Activated CD4-positive, alpha-beta memory T cell treated with anti-CD3 and anti-CD28 coated beads, Interleukin-2, amount 10 ng/mL, durations not matched to agents 7 days and 5 days (primary cell): ENCODE measurements at regions of chr6 and their contacts with region 1.

Region 1: GRCh38 chr6:29737707-29738630 is 14.7 kb downstream of the HLA-F start:
- DNase-seq: peak; percentile 76
- H3K4me3 Mint-ChIP-seq: no peak overlapping the region
- H3K27ac Mint-ChIP-seq: no peak overlapping the region
- H3K4me1 Mint-ChIP-seq: peaks cover 7% of the 10 kb centered on the region
- H3K27me3 Mint-ChIP-seq: no peaks in the 10 kb centered on the region

Region 2: DNA sequence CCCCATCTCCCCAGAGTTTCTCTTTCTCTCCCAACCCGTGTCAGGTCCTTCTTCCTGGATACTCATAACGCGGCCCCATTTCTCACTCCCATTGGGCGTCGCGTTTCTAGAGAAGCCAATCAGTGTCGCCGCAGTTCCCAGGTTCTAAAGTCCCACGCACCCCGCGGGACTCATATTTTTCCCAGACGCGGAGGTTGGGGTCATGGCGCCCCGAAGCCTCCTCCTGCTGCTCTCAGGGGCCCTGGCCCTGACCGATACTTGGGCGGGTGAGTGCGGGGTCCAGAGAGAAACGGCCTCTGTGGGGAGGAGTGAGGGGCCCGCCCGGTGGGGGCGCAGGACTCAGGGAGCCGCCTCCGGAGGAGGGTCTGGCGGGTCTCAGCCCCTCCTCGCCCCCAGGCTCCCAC is 14.7 kb before region 1 on chr6 and contains the start of gene HLA-F:
- CTCF ChIA-PET with region 1: interaction called, 20 read pairs
- POLR2A ChIA-PET with region 1: interaction called, 18 read pairs
- DNase-seq: peak; percentile 85
- H3K4me3 Mint-ChIP-seq: peak within 1 kb of the TSS; percentile 89
- H3K27ac Mint-ChIP-seq: peak within 1 kb of the TSS; percentile 76
- H3K4me1 Mint-ChIP-seq: peaks cover 53% of the 10 kb centered on the region
- H3K27me3 Mint-ChIP-seq: no peaks in the 10 kb centered on the region
- total RNA-seq, gene HLA-F: 318 to 346 TPM

Region 3: DNA sequence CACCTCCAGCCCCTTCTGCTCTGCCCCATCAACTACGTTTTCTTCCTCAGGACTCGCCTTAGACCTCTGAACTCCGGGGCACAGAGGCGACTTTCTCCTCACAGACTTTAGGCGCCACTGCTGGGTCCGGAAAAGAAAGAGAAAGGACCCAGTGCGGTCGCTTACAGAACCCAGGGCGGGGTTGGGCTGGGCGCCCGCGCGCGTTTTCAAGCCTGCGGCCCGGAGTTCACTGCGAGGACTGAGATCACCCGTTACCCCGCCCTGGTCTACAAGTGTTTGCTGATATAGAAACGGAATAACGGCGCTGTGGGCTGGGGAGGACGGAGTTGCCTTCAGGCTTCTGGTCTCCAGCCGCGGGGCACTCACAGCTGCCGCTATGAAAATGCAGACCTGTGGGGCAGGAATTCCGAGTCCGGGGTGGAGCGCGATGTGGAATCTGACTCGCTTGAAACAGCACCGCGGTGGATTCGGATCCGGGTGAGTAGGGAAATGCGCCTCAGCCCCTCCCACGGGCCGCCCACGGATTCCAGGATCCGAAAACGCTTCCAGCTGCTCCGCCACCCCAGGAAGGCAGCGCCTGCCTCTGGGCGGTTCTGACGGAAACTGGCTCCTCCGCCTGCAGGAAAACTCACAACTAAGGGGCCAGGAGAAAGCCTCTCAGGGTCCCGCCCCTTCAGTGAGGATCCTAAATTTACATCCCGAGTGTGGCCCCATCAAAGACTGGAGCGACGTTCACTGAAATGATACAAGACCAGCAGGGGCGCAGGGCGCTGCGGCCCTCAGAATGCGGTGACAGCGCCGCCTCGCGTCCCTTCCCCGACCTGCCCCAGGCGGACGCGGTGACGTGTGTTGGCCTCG is 14.7 kb after region 1 on chr6:
- CTCF ChIA-PET with region 1: interaction called, 94 read pairs
- POLR2A ChIA-PET with region 1: interaction called, 6 read pairs
- DNase-seq: peak; percentile 87
- H3K4me3 Mint-ChIP-seq: peak overlapping the region; percentile 83
- H3K27ac Mint-ChIP-seq: peak overlapping the region; percentile 87
- H3K4me1 Mint-ChIP-seq: peaks cover 52% of the 10 kb centered on the region
- H3K27me3 Mint-ChIP-seq: peaks cover 18% of the 10 kb centered on the region

Region 4: GRCh38 chr6:29769336-29769735 is 31.4 kb after region 1 on chr6:
- CTCF ChIA-PET with region 1: no interaction called
- POLR2A ChIA-PET with region 1: no interaction called
- DNase-seq: no peak
- H3K4me3 Mint-ChIP-seq: no peak overlapping the region
- H3K27ac Mint-ChIP-seq: no peak overlapping the region
- H3K4me1 Mint-ChIP-seq: peaks cover 8% of the 10 kb centered on the region
- H3K27me3 Mint-ChIP-seq: peaks cover 22% of the 10 kb centered on the region

Region 5: DNA sequence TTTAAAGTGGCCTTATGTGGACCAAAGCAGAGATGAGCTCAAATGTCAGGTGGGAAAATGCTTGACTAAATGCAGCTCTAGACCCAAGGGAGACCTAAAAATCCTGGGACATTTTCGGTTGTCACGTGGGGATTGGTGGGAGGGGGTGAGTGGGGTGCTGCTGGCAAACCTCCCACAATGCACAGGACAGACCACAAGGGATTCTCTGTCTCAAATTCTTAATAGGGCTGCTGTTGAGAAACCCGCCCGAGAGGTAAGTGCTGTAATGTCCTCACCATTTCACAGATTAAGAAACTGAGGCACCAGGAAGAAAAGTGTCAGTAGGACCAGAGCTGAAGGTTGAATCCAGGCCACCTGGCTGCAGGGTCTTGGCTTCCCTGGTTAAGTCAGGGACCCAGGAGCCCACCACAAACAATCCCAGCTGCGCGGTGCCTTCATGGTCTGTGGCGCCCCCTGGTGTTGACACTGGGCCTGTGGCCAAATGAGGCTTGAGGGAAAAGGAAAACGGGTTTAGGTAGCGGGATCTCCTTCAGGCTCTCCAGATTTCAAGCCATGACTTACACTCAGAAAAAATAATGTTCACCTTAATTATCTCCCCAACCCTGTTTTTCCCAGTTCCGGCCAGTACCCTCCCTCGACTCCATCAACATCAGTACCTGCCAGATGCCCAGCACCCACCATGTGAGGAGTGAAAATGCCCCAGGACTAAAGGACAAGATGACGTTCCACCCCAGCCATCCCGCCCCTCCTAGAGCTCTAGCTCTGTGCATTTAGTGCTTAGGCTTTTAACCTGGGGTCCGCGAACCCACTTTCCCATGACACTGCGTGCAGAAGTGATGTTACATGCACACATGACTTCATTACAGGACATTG is 96.8 kb after region 1 on chr6:
- CTCF ChIA-PET with region 1: interaction called, 46 read pairs
- POLR2A ChIA-PET with region 1: no interaction called
- DNase-seq: peak; percentile 56
- H3K4me3 Mint-ChIP-seq: no peak overlapping the region
- H3K27ac Mint-ChIP-seq: no peak overlapping the region
- H3K4me1 Mint-ChIP-seq: peaks cover 9% of the 10 kb centered on the region
- H3K27me3 Mint-ChIP-seq: peaks cover 62% of the 10 kb centered on the region